ENCODE measurements at regions of chr5 and their contacts with region 1.

Region 1: GRCh38 chr5:74640450-74640953 is at the start of gene ENC1:
- DNase-seq: peak; percentile 88
- ATAC-seq: peak; percentile 91
- total RNA-seq, gene ENC1: 6.6 TPM

Region 2: DNA sequence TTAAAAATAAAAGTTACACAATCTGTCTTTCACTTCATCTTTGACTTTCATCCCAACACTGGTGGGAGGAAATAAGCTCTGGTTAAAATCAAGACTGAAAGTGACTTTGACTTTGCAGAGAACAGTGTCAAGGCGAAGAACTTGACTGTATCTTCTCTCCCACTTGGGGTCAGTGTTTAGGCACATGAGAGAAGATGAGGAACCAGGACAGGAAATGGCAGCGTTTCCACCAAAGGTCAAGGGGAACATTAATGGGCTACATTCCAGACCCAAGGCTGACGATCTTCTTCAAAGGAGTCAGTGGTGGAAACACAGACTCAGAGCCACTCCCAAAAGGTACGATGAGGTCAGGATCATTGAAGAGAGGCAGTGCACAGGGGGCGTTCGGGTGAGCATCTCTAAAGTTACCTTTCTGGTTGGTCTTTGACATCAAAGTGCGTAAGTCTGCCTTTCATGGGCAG is 605.0 kb before region 1 on chr5:
- intact Hi-C with region 1: loop called (anchors 10 kb)
- DNase-seq: no peak
- ATAC-seq: peak; percentile 94

Region 3: DNA sequence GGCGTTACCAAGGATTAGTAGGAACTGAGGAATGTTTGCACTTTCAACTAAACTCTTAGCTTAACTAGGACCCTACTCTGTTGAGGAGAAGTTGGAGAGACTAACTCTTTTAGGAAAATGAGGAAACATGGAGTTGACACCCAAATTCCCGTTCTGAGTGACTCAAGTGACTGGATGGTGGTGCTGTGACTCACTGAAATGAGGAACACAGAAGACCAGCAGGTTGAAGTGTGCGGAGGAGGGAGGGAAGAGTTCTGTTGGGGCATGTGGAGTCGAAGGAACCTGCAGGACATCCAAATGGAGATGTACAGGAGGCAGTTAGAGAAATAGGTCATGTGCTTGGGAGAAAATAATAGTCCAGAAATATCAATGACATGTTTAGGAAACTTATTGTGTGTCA is 52.7 kb after region 1 on chr5:
- intact Hi-C with region 1: no loop called
- DNase-seq: no peak
- ATAC-seq: no peak

Measured in sciatic nerve (tissue), 2 donors.